ENCODE measurements at regions of chr2 and their contacts with region 1.

Region 1: GRCh38 chr2:32063310-32064161 is at the start of gene SPAST:
- DNase-seq: peak; percentile 91 to 98 (median 96)
- ATAC-seq: peak; percentile 87
- H3K4me3 ChIP-seq: peak within 1 kb of the TSS; percentile 90
- H3K4me3 Mint-ChIP-seq: peak within 1 kb of the TSS; percentile 97
- H3K27ac ChIP-seq: peak within 1 kb of the TSS; percentile 66 to 80
- H3K27ac Mint-ChIP-seq: peak within 1 kb of the TSS; percentile 90
- H3K4me1 ChIP-seq: peaks cover 35% of the 10 kb centered on the region
- H3K4me1 Mint-ChIP-seq: peaks cover 39% of the 10 kb centered on the region
- H3K27me3 ChIP-seq: no peaks in the 10 kb centered on the region
- H3K27me3 Mint-ChIP-seq: no peaks in the 10 kb centered on the region
- CTCF ChIP-seq: peak; percentile 64
- total RNA-seq, gene SPAST: 7.0 to 7.4 TPM

Region 2: DNA sequence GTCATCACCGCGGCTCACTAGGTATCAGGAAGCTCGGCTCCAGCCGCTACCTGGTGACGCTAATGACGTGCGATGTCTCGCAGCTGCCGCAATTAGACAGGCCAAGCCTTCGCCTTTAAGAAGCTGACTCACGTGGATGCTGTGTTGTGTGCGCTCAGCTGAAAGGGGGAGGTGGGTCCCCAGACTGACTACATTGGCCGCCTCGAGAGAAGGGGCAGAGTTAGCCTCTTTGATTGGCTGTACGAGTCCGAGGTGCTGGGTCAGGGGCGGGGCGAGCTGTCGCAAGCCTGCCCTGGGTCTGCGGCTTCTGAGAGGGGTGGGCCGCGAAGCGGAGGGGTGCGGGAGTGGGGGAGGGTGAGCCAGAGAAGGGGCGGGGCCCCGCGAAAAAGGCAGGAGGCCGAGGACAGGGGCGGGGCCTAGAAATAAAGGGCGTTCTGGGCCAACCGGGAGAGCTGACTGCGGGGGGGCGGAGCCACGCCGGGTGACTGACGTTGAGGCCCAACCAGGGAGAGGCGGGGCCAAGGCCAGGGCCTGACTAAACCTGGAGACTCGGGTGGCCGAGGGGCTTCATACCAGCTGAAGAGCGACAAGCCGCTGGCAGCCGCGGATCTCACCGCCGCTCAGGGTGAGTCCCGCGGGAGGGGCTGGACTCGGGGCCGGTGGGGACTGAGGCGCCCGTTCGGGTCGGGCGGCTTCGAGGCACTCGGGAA is 1916.9 kb before region 1 on chr2 and contains the start of gene YPEL5:
- CTCF ChIA-PET with region 1: no interaction called
- POLR2A ChIA-PET with region 1: interaction called, 3 read pairs
- intact Hi-C with region 1: loop called in 1 of 2 experiments (anchors 10 kb)
- DNase-seq: peak; percentile 99 to 100 (median 99)
- ATAC-seq: peak; percentile 82
- H3K4me3 ChIP-seq: peak within 1 kb of the TSS; percentile 71
- H3K4me3 Mint-ChIP-seq: peak within 1 kb of the TSS; percentile 94
- H3K27ac ChIP-seq: peak within 1 kb of the TSS; percentile 97 to 100
- H3K27ac Mint-ChIP-seq: peak within 1 kb of the TSS; percentile 99
- H3K4me1 ChIP-seq: peaks cover 38% of the 10 kb centered on the region
- H3K4me1 Mint-ChIP-seq: peaks cover 68% of the 10 kb centered on the region
- H3K27me3 ChIP-seq: no peaks in the 10 kb centered on the region
- H3K27me3 Mint-ChIP-seq: no peaks in the 10 kb centered on the region
- CTCF ChIP-seq: no peak
- total RNA-seq, gene YPEL5: 932 to 972 TPM

Region 3: GRCh38 chr2:31886697-31887096 is 176.8 kb before region 1 on chr2:
- CTCF ChIA-PET with region 1: no interaction called
- POLR2A ChIA-PET with region 1: no interaction called
- intact Hi-C with region 1: loop called in 1 of 2 experiments (anchors 10 kb)
- DNase-seq: peak in 3 of 14 experiments; percentile 1 to 21 (median 19)
- ATAC-seq: no peak
- H3K4me3 ChIP-seq: no peak overlapping the region
- H3K4me3 Mint-ChIP-seq: no peak overlapping the region
- H3K27ac ChIP-seq: no peak overlapping the region
- H3K27ac Mint-ChIP-seq: no peak overlapping the region
- H3K4me1 ChIP-seq: no peaks in the 10 kb centered on the region
- H3K4me1 Mint-ChIP-seq: peaks cover 5% of the 10 kb centered on the region
- H3K27me3 ChIP-seq: no peaks in the 10 kb centered on the region
- H3K27me3 Mint-ChIP-seq: no peaks in the 10 kb centered on the region
- CTCF ChIP-seq: no peak

Region 4: DNA sequence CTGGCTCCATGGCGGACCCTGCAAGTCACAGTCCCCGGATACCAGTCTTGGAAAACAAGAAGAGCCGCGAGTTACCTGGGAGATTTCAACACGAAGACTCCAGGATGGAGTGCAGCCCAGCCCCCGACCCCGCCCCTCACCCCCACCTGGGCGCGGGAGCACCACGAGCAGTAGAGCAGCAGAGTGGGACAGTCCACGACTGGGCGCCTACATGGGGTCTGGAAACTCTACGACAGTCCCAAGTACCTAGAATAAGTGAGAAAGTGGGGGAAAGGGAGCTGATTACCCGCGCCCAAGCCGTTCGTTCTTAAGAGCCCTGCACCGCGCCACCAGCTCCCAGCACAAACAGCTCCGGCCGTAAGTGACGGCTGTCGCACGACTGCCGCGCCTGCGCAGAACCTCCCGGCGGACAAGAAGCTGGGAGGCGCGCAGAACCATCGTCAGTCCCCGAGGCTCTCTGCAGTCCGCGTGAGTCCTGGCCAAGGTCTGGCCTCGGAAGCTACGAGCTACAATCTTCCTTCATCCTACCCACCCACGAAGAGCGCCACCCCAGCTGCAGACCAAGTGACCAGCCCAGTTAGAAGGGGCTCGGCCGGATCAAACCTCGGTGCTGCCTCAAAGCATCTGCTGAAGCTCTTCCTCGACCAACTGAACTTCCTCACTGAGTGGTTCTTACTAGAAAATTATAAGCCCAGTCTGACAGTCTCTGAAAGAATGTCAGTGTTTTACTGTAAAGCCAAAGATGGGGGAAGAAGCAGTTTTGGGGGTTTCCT is 23.9 kb before region 1 on chr2 and contains the start of gene DPY30:
- CTCF ChIA-PET with region 1: interaction called, 24 read pairs
- POLR2A ChIA-PET with region 1: interaction called, 65 read pairs
- intact Hi-C with region 1: loop called (anchors 1 kb)
- DNase-seq: peak; percentile 82 to 96 (median 88)
- ATAC-seq: peak; percentile 95
- H3K4me3 ChIP-seq: peak within 1 kb of the TSS; percentile 83
- H3K4me3 Mint-ChIP-seq: peak within 1 kb of the TSS; percentile 86
- H3K27ac ChIP-seq: peak within 1 kb of the TSS; percentile 55 to 79
- H3K27ac Mint-ChIP-seq: peak within 1 kb of the TSS; percentile 90
- H3K4me1 ChIP-seq: peaks cover 16% of the 10 kb centered on the region
- H3K4me1 Mint-ChIP-seq: peaks cover 24% of the 10 kb centered on the region
- H3K27me3 ChIP-seq: no peaks in the 10 kb centered on the region
- H3K27me3 Mint-ChIP-seq: no peaks in the 10 kb centered on the region
- CTCF ChIP-seq: no peak
- total RNA-seq, gene DPY30: 12.4 to 13.1 TPM

Region 5: DNA sequence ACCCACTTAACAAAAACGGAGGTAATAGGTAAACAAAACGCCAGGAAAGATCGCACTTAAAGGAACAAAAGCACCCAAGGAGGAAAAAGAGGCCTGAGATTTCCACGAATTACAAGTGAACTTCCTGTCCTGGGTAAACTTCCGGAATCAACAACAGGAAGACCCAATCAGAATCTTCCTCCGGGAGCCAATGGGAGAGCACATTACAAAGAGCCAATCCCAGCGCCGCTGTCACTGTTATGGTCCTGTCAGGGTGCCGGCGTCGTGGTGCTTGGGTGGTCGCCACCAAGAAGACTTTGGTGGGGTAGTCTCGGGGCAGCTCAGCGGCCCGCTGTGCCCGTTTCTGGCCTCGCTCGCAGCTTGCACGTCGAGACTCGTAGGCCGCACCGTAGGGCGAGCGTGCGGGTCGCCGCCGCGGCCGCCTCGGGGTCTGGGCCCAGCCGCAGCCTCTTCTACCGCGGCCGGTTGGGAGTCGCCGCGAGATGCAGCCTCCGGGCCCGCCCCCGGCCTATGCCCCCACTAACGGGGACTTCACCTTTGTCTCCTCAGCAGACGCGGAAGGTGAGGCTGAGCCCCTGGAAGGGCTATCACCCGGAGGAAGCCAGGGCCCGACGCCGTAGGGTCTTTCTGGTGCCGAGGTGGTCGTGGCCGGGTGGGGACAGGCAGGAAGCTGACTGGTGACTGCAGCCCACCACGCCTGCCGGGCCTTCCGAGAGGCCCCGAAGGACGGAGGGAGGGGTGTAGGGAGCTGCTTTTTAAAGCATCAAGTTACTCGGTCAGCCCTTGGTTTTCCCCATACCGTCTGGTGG is 214.3 kb after region 1 on chr2 and contains the start of gene YIPF4:
- CTCF ChIA-PET with region 1: no interaction called
- POLR2A ChIA-PET with region 1: no interaction called
- intact Hi-C with region 1: loop called in 1 of 2 experiments (anchors 5 kb)
- DNase-seq: peak; percentile 79 to 94 (median 86)
- ATAC-seq: peak; percentile 98
- H3K4me3 ChIP-seq: peak within 1 kb of the TSS; percentile 85
- H3K4me3 Mint-ChIP-seq: peak within 1 kb of the TSS; percentile 97
- H3K27ac ChIP-seq: peak within 1 kb of the TSS; percentile 80 to 81
- H3K27ac Mint-ChIP-seq: peak within 1 kb of the TSS; percentile 99
- H3K4me1 ChIP-seq: peaks cover 36% of the 10 kb centered on the region
- H3K4me1 Mint-ChIP-seq: peaks cover 32% of the 10 kb centered on the region
- H3K27me3 ChIP-seq: no peaks in the 10 kb centered on the region
- H3K27me3 Mint-ChIP-seq: no peaks in the 10 kb centered on the region
- CTCF ChIP-seq: no peak
- total RNA-seq, gene YIPF4: 7.7 to 9.7 TPM

Region 6: GRCh38 chr2:32330136-32330535 is 266.6 kb after region 1 on chr2:
- CTCF ChIA-PET with region 1: no interaction called
- POLR2A ChIA-PET with region 1: no interaction called
- intact Hi-C with region 1: no loop called
- DNase-seq: no peak
- ATAC-seq: no peak
- H3K4me3 ChIP-seq: no peak overlapping the region
- H3K4me3 Mint-ChIP-seq: no peak overlapping the region
- H3K27ac ChIP-seq: no peak overlapping the region
- H3K27ac Mint-ChIP-seq: no peak overlapping the region
- H3K4me1 ChIP-seq: no peaks in the 10 kb centered on the region
- H3K4me1 Mint-ChIP-seq: no peaks in the 10 kb centered on the region
- H3K27me3 ChIP-seq: no peaks in the 10 kb centered on the region
- H3K27me3 Mint-ChIP-seq: no peaks in the 10 kb centered on the region
- CTCF ChIP-seq: no peak

Region 7: DNA sequence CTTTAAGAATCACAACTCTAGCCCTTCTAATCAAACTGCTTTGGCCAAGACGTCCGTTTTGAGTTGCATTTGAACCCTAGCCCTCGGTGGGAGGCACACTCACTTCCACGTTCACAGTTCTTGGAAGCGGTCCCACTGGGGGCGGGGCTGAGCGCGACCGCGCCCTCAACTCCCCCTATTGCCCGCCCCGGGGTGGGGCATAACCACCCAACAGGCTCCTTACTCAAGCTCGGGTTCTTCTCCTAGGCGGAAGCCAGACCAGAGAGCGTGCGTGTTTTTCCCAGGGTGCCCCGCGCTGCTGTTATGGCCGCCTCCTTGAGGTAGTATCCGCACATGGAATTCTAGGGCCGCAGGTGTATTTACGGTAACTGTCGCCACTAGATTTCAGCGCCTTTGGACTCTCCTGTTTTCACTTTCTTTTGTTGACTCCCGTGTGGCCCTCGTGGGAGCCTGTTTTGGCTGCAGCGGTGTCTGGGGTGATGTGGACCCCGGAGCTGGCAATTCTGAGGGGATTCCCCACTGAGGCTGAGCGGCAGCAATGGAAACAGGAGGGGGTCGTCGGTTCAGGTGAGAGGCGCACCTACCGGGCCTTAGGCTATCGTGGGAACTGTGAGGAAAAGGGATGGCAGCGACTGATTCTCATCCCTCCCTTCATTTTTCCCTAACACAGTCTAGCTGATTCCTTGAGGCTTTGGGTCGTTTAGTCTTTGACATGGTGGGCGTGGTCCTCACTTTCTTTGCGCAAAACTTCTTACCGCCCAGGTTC is 564.5 kb after region 1 on chr2 and contains the start of gene TTC27:
- CTCF ChIA-PET with region 1: no interaction called
- POLR2A ChIA-PET with region 1: interaction called, 6 read pairs
- intact Hi-C with region 1: loop called in 1 of 2 experiments (anchors 5 kb)
- DNase-seq: peak; percentile 91 to 97 (median 94)
- ATAC-seq: peak; percentile 99
- H3K4me3 ChIP-seq: peak within 1 kb of the TSS; percentile 88
- H3K4me3 Mint-ChIP-seq: peak within 1 kb of the TSS; percentile 96
- H3K27ac ChIP-seq: peak within 1 kb of the TSS; percentile 50 to 60
- H3K27ac Mint-ChIP-seq: peak within 1 kb of the TSS; percentile 81
- H3K4me1 ChIP-seq: peaks cover 18% of the 10 kb centered on the region
- H3K4me1 Mint-ChIP-seq: peaks cover 39% of the 10 kb centered on the region
- H3K27me3 ChIP-seq: no peaks in the 10 kb centered on the region
- H3K27me3 Mint-ChIP-seq: no peaks in the 10 kb centered on the region
- CTCF ChIP-seq: no peak
- total RNA-seq, gene TTC27: 11.6 to 17.6 TPM